Right cardiac atrium (tissue), 5 donors: ENCODE measurements at regions of chr3 and their contacts with region 1.

Region 1: GRCh38 chr3:51682079-51682478 is 11.0 kb downstream of the TEX264 start:
- DNase-seq: peak in 2 of 3 donors; percentile 48 to 83
- ATAC-seq: peak; percentile 66 to 75
- H3K4me3 ChIP-seq: no peak overlapping the region
- H3K27ac ChIP-seq: no peak overlapping the region
- H3K4me1 ChIP-seq: peaks cover 38% of the 10 kb centered on the region
- H3K27me3 ChIP-seq: no peaks in the 10 kb centered on the region

Region 2: GRCh38 chr3:51391075-51391567 is 291.0 kb before region 1 on chr3 and contains the start of gene RBM15B:
- intact Hi-C with region 1: loop called in 2 of 4 experiments (anchors 10 kb)
- DNase-seq: peak; percentile 98 to 100 (median 99)
- ATAC-seq: peak; percentile 93 to 96
- H3K4me3 ChIP-seq: peak within 1 kb of the TSS; percentile 73
- H3K27ac ChIP-seq: peak within 1 kb of the TSS; percentile 83
- H3K4me1 ChIP-seq: peaks cover 22% of the 10 kb centered on the region
- H3K27me3 ChIP-seq: no peaks in the 10 kb centered on the region
- total RNA-seq, gene RBM15B: 15.0 to 19.6 (median 15.6) TPM

Region 3: DNA sequence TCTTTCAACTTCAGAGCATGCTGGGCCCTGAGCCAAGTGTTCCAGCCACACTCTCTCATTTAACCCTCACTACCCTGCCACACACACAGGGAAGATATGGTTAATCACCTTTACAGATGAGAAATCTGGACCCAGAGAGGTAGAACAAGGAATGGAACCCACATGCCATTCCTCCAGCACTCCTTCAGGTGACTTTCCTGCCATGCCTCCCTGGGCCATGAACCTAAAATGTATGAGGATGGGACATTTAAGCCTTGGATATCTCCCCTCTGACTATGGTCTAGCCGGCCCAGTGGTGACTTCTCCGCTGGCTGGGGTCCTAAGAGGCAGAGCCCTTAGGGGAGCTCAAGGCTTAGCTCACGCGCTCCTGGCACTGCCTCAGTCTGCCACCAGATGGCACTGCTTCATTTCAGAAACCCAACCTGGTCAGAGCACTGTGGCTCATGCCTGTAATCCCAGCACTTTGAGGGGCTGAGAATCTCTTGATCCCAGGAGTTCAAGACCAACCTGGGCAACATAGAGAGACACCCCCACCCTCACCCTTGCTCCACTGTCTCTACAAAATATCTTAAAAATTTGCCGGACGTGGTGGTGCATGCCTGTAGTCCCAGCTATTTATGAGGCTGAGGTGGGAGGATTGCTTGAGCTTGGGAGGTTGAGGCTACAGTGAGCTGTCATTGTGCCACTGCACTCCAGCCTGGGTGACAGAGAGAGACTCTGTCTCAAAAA is 180.1 kb before region 1 on chr3:
- intact Hi-C with region 1: loop called in 1 of 4 experiments (anchors 5 kb)
- DNase-seq: peak; percentile 78 to 93 (median 90)
- ATAC-seq: peak; percentile 12 to 21
- H3K4me3 ChIP-seq: no peak overlapping the region
- H3K27ac ChIP-seq: no peak overlapping the region
- H3K4me1 ChIP-seq: no peaks in the 10 kb centered on the region
- H3K27me3 ChIP-seq: no peaks in the 10 kb centered on the region